ENCODE measurements at regions of chr15 and their contacts with region 1.

Region 1: GRCh38 chr15:66720206-66721006 is 18.4 kb downstream of the SMAD6 start:
- DNase-seq: no peak
- ATAC-seq: peak; percentile 64

Region 2: DNA sequence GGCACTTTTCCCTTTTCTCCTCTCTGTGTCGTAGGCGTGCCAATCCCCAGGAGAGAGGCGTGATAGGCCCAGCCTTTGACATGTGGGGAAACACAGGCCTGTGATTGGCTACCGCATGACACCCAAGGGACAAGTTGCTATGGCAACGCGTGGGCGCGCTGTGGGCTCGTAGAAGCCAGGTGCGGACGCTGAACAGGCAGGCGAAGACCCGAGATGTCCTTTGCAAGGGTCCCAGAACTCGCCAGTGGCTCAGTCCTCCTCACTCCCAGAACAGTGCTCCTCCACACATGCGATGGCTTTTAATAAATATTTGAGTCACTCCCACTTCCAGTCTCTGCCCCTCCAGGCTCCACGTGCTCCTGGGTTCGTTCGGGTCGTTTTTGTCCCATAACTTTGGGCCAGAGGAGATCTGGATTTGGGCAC is 1671.0 kb before region 1 on chr15:
- intact Hi-C with region 1: loop called (anchors 5 kb)
- DNase-seq: peak; percentile 95
- ATAC-seq: peak; percentile 94

Measured in sciatic nerve (tissue), 2 donors.